CD4-positive, alpha-beta T cell (primary cell): ENCODE measurements at regions of chr2 and their contacts with region 1.

Region 1: GRCh38 chr2:180125245-180125962 is 118.3 kb upstream of the CWC22 start:
- DNase-seq: peak in 12 of 14 experiments; percentile 3 to 81 (median 28)
- ATAC-seq: peak; percentile 77
- H3K4me3 ChIP-seq: no peak overlapping the region
- H3K4me3 Mint-ChIP-seq: no peak overlapping the region
- H3K27ac ChIP-seq: no peak overlapping the region
- H3K27ac Mint-ChIP-seq: no peak overlapping the region
- H3K4me1 ChIP-seq: no peaks in the 10 kb centered on the region
- H3K4me1 Mint-ChIP-seq: peaks cover 5% of the 10 kb centered on the region
- H3K27me3 ChIP-seq: peaks cover 0 to 13% of the 10 kb centered on the region in 2 experiments
- H3K27me3 Mint-ChIP-seq: peaks cover 20% of the 10 kb centered on the region
- CTCF ChIP-seq: peak; percentile 34

Region 2: DNA sequence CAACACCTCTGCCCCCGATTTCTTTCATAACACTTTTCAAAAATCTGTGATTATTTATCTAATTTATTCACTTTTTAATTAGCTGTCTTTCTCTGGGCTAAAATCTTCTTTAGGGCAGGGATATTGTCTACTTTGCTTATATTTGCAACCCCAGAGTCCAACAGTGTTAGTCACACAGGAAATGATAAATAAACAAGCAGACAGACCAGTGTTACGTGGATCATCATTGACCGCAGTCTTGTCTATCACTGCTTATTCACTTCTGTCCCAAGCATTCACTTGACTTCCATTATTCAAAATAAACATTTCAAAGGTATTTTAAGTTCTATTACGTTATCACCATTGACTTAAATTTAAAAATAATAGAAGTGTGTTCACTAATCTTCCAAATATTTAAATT is 617.4 kb after region 1 on chr2:
- CTCF ChIA-PET with region 1: no interaction called
- POLR2A ChIA-PET with region 1: no interaction called
- intact Hi-C with region 1: no loop called
- DNase-seq: no peak
- ATAC-seq: no peak
- H3K4me3 ChIP-seq: no peak overlapping the region
- H3K4me3 Mint-ChIP-seq: no peak overlapping the region
- H3K27ac ChIP-seq: no peak overlapping the region
- H3K27ac Mint-ChIP-seq: no peak overlapping the region
- H3K4me1 ChIP-seq: no peaks in the 10 kb centered on the region
- H3K4me1 Mint-ChIP-seq: no peaks in the 10 kb centered on the region
- H3K27me3 ChIP-seq: peaks cover 0 to 3% of the 10 kb centered on the region in 2 experiments
- H3K27me3 Mint-ChIP-seq: peaks cover 5% of the 10 kb centered on the region
- CTCF ChIP-seq: no peak

Region 3: DNA sequence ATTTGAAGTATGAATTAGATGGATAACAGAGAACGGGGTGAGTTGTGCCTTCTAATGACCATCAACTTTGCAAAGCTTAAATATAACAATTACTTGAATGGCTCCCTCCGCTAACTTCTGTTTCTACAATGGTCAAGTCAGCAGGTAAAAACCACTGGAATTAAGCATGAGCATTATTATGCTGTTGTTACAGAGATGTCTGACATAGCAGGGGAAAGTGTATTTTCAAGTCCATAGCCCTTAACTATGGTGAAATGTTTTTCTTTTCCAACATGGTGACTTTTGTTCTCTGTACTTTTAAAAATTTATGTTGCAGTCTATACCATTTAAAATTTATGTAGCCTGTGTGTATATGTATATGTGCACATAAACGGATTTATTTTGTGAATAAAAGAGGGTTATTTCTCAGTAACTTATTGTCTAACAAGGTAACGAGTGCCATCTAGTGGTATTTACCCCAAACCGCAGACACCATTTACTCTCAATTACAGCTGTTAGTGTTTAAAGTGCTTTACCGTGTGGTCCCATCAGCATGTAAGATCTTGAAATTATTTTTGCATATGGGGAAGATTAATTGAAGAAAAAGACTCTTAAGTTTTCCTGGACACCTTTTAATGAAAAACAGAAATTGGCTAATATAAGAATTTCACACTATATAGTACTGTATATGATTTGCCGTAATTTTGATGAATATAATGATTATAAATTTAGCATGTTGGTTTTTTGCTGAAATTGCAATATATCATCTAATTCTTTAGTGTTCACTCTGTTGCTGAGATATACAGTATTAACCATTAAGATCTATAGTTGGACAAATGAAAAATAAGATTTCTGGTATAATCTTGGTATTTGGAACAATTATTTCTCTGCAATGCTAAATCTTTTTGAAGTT is 933.2 kb after region 1 on chr2:
- CTCF ChIA-PET with region 1: interaction called, 11 read pairs
- POLR2A ChIA-PET with region 1: no interaction called
- intact Hi-C with region 1: loop called (anchors 1 kb)
- DNase-seq: peak in 11 of 14 experiments; percentile 3 to 74 (median 26)
- ATAC-seq: no peak
- H3K4me3 ChIP-seq: no peak overlapping the region
- H3K4me3 Mint-ChIP-seq: no peak overlapping the region
- H3K27ac ChIP-seq: no peak overlapping the region
- H3K27ac Mint-ChIP-seq: no peak overlapping the region
- H3K4me1 ChIP-seq: no peaks in the 10 kb centered on the region
- H3K4me1 Mint-ChIP-seq: peaks cover 9% of the 10 kb centered on the region
- H3K27me3 ChIP-seq: no peaks in the 10 kb centered on the region
- H3K27me3 Mint-ChIP-seq: no peaks in the 10 kb centered on the region
- CTCF ChIP-seq: peak; percentile 92

Region 4: GRCh38 chr2:181466661-181467576 is 1341.5 kb after region 1 on chr2:
- CTCF ChIA-PET with region 1: no interaction called
- POLR2A ChIA-PET with region 1: no interaction called
- intact Hi-C with region 1: loop called in 1 of 2 experiments (anchors 10 kb)
- DNase-seq: peak; percentile 63 to 89 (median 74)
- ATAC-seq: peak; percentile 65
- H3K4me3 ChIP-seq: no peak overlapping the region
- H3K4me3 Mint-ChIP-seq: peak overlapping the region; percentile 69
- H3K27ac ChIP-seq: peak overlapping the region; percentile 23 to 35
- H3K27ac Mint-ChIP-seq: peak overlapping the region; percentile 84
- H3K4me1 ChIP-seq: peaks cover 33% of the 10 kb centered on the region
- H3K4me1 Mint-ChIP-seq: peaks cover 89% of the 10 kb centered on the region
- H3K27me3 ChIP-seq: no peaks in the 10 kb centered on the region
- H3K27me3 Mint-ChIP-seq: no peaks in the 10 kb centered on the region
- CTCF ChIP-seq: peak; percentile 94

Region 5: GRCh38 chr2:181715033-181715630 is 1589.7 kb after region 1 on chr2:
- CTCF ChIA-PET with region 1: no interaction called
- POLR2A ChIA-PET with region 1: no interaction called
- intact Hi-C with region 1: loop called (anchors 1 to 5 kb)
- DNase-seq: peak; percentile 30 to 86 (median 60)
- ATAC-seq: peak; percentile 80
- H3K4me3 ChIP-seq: no peak overlapping the region
- H3K4me3 Mint-ChIP-seq: no peak overlapping the region
- H3K27ac ChIP-seq: no peak overlapping the region
- H3K27ac Mint-ChIP-seq: no peak overlapping the region
- H3K4me1 ChIP-seq: no peaks in the 10 kb centered on the region
- H3K4me1 Mint-ChIP-seq: no peaks in the 10 kb centered on the region
- H3K27me3 ChIP-seq: no peaks in the 10 kb centered on the region
- H3K27me3 Mint-ChIP-seq: no peaks in the 10 kb centered on the region
- CTCF ChIP-seq: peak; percentile 72

Region 6: DNA sequence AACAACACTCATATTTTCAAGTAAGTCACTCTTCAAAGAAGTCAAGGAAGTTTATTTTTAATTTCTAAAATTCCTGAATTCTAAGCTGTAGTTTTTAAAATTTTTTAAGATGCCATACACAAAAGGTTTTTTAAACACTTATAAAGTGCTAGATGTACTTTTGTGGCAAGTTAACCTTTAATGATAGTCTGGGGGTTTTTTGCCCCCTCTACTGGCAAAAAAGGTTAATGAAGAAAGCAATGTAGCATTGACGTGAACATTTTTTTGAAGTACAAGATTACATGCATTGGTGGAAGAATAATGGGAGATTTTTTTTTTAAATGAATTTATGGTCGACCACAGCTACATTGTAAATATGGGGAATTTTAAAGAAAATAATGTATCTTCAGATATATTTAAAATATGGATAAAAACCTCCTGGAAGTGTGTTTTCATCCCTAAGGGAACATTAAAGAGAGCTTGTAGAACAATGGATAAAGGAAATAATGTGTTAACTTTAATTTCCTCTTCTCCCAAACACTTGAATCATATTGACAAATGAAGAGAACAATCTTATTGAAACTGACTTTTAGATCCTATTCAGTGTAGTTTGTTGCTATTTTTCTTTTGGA is 1778.7 kb after region 1 on chr2:
- CTCF ChIA-PET with region 1: no interaction called
- POLR2A ChIA-PET with region 1: no interaction called
- intact Hi-C with region 1: loop called in 1 of 2 experiments (anchors 10 kb)
- DNase-seq: peak in 3 of 14 experiments; percentile 48 to 59 (median 58)
- ATAC-seq: no peak
- H3K4me3 ChIP-seq: no peak overlapping the region
- H3K4me3 Mint-ChIP-seq: no peak overlapping the region
- H3K27ac ChIP-seq: no peak overlapping the region
- H3K27ac Mint-ChIP-seq: no peak overlapping the region
- H3K4me1 ChIP-seq: no peaks in the 10 kb centered on the region
- H3K4me1 Mint-ChIP-seq: peaks cover 23% of the 10 kb centered on the region
- H3K27me3 ChIP-seq: no peaks in the 10 kb centered on the region
- H3K27me3 Mint-ChIP-seq: no peaks in the 10 kb centered on the region
- CTCF ChIP-seq: peak; percentile 64